ENCODE measurements at regions of chr5 and their contacts with region 1.

Region 1: DNA sequence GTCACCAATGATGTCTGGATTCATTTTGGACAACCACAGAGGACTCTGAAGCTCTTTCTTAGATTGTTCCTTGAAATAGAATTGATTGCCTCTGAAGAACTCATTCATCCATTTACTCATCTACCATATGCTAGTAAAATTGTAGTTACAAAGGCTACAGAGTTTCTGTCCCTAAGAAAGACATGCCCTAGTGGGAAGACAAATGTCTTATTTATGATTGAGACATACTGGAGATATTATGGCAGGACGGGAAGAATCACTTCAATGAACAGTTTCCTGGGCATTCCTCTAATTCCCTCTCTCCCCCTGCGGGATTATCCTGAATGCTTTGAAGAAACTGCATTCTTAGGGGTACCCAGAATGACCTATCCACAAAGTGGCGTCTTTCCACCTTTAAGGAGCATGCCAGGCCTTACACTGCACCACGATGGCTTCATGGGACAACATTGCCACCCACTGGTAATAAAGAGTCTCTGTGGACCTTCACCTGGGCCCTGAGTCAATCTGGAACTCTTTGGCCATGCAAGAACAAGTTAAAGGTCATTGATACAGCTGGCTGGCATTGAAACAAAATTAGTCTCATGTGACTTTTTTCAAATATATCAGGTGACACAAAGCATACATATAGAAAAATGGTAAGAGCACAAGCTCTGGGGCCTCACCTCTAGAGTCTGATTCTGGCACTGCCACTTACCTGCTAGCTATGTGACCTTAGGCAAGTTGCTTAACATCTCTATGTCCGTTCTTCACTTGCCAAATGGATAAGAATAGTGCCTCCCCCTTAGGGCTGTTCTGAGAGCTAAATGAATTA is 32.1 kb downstream of the ANKRD55 start:
- H3K4me3 ChIP-seq: no peak overlapping the region
- H3K27ac ChIP-seq: no peak overlapping the region
- H3K4me1 ChIP-seq: no peaks in the 10 kb centered on the region
- CTCF ChIP-seq: peak; percentile 88

Region 2: DNA sequence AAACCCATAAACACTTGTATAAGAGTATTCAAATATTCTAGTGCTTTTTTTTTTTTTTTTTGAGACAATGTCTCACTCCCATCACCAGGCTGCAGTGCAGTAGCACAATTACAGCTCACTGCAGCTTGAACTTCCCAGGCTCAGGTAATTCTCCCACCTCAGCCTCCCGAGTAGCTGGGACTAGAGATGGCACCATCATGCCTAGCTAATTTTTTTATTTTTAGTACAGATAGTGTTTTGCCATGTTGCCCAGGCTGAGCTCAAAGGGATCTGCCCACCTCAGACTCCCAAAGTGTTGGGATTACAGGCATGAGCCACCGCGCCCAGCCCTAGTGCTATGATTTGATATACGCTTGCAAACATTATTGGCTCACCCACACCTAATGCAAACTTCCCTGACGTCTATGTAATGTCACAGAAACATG is 218.1 kb before region 1 on chr5:
- CTCF ChIA-PET with region 1: interaction called, 19 read pairs
- POLR2A ChIA-PET with region 1: no interaction called
- H3K4me3 ChIP-seq: no peak overlapping the region
- H3K27ac ChIP-seq: no peak overlapping the region
- H3K4me1 ChIP-seq: no peaks in the 10 kb centered on the region
- CTCF ChIP-seq: no peak

Region 3: GRCh38 chr5:56037531-56038010 is 163.5 kb before region 1 on chr5:
- CTCF ChIA-PET with region 1: interaction called, 4 read pairs
- POLR2A ChIA-PET with region 1: interaction called, 12 read pairs
- H3K4me3 ChIP-seq: no peak overlapping the region
- H3K27ac ChIP-seq: no peak overlapping the region
- H3K4me1 ChIP-seq: no peaks in the 10 kb centered on the region
- CTCF ChIP-seq: no peak